OCI-LY7 (cell line): ENCODE measurements at regions of chr10 and their contacts with region 1.

Region 1: GRCh38 chr10:25758041-25758457 is 176.0 kb upstream of the MYO3A start:
- DNase-seq: peak; percentile 59
- H3K4me3 ChIP-seq: no peak overlapping the region
- H3K27ac ChIP-seq: no peak overlapping the region
- H3K4me1 ChIP-seq: no peaks in the 10 kb centered on the region
- CTCF ChIP-seq: peak; percentile 91

Region 2: DNA sequence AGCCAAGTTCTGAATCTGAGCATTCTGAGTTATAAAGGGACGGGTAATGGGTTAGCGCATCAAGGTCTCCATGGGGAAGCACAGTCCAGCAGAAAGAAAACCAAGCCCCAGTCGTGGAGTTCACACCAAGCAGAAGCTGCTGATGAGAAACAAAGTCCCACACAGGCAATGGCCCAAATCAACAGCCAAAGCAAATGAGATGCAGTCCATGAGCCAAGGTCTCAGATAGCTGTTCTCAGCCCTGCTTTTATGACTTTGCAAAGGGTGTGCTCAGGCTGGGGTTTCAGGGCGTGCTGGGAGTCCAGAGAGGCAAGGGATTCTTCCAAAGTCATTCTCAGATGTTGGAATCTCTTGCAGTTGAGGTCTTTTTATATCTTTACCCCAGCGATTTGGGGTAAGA is 709.6 kb before region 1 on chr10:
- CTCF ChIA-PET with region 1: no interaction called
- POLR2A ChIA-PET with region 1: no interaction called
- intact Hi-C with region 1: no loop called
- DNase-seq: no peak
- H3K4me3 ChIP-seq: no peak overlapping the region
- H3K27ac ChIP-seq: no peak overlapping the region
- H3K4me1 ChIP-seq: no peaks in the 10 kb centered on the region
- CTCF ChIP-seq: no peak

Region 3: GRCh38 chr10:25747084-25747483 is 11.0 kb before region 1 on chr10:
- CTCF ChIA-PET with region 1: no interaction called
- POLR2A ChIA-PET with region 1: no interaction called
- intact Hi-C with region 1: no loop called
- DNase-seq: no peak
- H3K4me3 ChIP-seq: no peak overlapping the region
- H3K27ac ChIP-seq: no peak overlapping the region
- H3K4me1 ChIP-seq: no peaks in the 10 kb centered on the region
- CTCF ChIP-seq: no peak

Region 4: DNA sequence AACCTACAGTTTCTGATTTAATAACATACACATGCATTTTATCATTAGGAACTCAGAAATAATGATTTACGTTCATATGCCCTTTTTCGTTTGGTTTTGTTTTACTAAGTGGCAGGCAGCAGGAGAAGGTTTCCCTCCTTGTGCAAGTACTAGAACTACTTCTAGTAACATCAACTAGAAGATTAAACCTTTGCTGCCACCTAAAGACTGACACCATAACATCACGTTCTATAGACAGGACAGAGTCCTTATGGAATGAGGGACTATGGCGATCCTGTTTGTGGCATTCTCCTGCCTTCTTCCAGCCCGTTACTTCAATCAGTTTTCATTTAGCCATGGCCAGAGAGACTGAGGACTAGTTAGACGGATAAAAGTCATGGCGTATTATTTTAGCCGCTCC is 511.7 kb after region 1 on chr10:
- CTCF ChIA-PET with region 1: no interaction called
- POLR2A ChIA-PET with region 1: no interaction called
- intact Hi-C with region 1: loop called (anchors 5 kb)
- DNase-seq: peak; percentile 71
- H3K4me3 ChIP-seq: no peak overlapping the region
- H3K27ac ChIP-seq: no peak overlapping the region
- H3K4me1 ChIP-seq: no peaks in the 10 kb centered on the region
- CTCF ChIP-seq: peak; percentile 80